ENCODE measurements at regions of chr1 and their contacts with region 1.

Region 1: GRCh38 chr1:64136752-64137411 is 66.5 kb upstream of the UBE2U start:
- DNase-seq: peak; percentile 85
- ATAC-seq: peak; percentile 88
- H3K4me3 Mint-ChIP-seq: no peak overlapping the region
- H3K27ac Mint-ChIP-seq: no peak overlapping the region
- H3K4me1 Mint-ChIP-seq: no peaks in the 10 kb centered on the region
- H3K27me3 Mint-ChIP-seq: peaks cover 2% of the 10 kb centered on the region
- CTCF ChIP-seq: peak; percentile 92

Region 2: GRCh38 chr1:63615768-63616420 is 521.0 kb before region 1 on chr1:
- CTCF ChIA-PET with region 1: interaction called, 19 read pairs
- POLR2A ChIA-PET with region 1: no interaction called
- intact Hi-C with region 1: loop called (anchors 2 kb)
- DNase-seq: peak; percentile 68
- ATAC-seq: peak; percentile 69
- H3K4me3 Mint-ChIP-seq: no peak overlapping the region
- H3K27ac Mint-ChIP-seq: no peak overlapping the region
- H3K4me1 Mint-ChIP-seq: no peaks in the 10 kb centered on the region
- H3K27me3 Mint-ChIP-seq: no peaks in the 10 kb centered on the region
- CTCF ChIP-seq: peak; percentile 84

Region 3: DNA sequence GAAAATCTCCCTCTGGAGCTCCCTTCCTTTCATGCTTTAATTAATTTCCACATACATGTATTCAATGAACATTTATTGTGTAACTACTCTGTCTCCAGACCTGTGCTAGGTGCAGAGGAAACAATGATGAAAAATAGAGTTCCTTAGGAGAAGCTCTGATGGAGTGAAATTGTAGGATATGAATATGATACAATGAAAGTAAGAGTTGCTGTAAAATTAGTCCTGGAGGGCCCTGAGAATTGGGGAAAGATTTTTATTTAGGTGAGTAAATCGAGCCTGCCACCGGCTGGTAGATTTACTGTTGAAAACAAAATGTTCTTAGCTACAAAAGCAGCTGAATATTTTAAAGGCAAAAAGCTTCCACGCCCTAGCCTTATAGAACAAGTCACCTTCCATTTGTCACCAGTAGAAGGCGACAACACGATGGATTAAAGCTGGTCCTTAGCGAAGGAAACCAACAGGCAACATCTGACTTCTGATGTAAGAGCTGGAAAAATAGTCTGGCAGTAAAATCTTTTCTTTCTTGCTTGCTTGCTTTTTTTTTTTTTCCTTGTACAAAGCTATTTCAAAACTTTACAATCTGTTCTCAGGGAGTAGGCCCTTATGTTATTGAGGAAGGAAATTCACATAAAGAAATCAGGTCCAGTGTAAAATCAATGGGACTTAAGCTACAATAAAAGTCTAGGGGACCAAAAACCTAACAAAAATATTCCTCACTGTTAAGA is 445.0 kb before region 1 on chr1:
- CTCF ChIA-PET with region 1: interaction called, 40 read pairs
- POLR2A ChIA-PET with region 1: no interaction called
- intact Hi-C with region 1: loop called (anchors 10 kb)
- DNase-seq: peak; percentile 46
- ATAC-seq: peak; percentile 78
- H3K4me3 Mint-ChIP-seq: no peak overlapping the region
- H3K27ac Mint-ChIP-seq: no peak overlapping the region
- H3K4me1 Mint-ChIP-seq: no peaks in the 10 kb centered on the region
- H3K27me3 Mint-ChIP-seq: no peaks in the 10 kb centered on the region
- CTCF ChIP-seq: peak; percentile 62

Region 4: DNA sequence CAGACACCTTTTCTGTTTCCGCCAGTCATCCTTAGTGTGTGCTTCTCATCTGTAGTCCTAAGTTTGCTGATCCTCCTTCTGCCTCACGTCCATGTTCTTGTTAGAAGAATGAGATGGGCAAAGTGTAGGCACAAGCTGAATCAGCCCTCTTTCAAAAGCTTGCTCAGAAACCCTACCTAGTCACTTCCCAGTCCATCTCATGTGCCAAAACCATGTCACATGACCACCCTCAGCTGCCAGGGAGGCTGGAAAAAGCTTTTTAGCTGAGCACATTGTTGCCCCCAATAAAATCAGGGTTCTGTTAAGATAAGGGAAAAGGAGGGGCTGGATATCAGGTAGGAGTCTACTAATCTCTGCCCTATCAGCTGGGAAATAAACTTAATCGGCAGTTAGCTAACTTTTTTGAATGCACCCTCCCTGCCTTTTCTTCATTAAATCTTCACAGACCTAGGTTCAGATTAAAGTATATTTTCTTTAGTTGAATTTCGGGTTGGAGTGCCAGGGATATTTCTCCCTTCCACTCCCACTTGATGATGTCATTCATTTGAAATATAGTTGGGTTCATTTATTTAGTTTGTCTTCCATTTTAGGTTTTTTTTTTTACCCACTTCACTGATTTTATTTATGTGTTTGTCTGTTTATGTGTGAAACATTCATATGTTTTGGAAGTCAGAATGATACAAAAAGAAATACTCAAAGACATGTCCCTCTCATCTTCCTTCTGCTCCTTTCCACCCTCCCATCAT is 233.9 kb before region 1 on chr1:
- CTCF ChIA-PET with region 1: no interaction called
- POLR2A ChIA-PET with region 1: no interaction called
- intact Hi-C with region 1: no loop called
- DNase-seq: no peak
- ATAC-seq: no peak
- H3K4me3 Mint-ChIP-seq: no peak overlapping the region
- H3K27ac Mint-ChIP-seq: no peak overlapping the region
- H3K4me1 Mint-ChIP-seq: no peaks in the 10 kb centered on the region
- H3K27me3 Mint-ChIP-seq: peaks cover 5% of the 10 kb centered on the region
- CTCF ChIP-seq: no peak

Region 5: GRCh38 chr1:64126581-64126980 is 10.3 kb before region 1 on chr1:
- CTCF ChIA-PET with region 1: interaction called, 10 read pairs
- POLR2A ChIA-PET with region 1: no interaction called
- intact Hi-C with region 1: no loop called
- DNase-seq: no peak
- ATAC-seq: no peak
- H3K4me3 Mint-ChIP-seq: no peak overlapping the region
- H3K27ac Mint-ChIP-seq: no peak overlapping the region
- H3K4me1 Mint-ChIP-seq: no peaks in the 10 kb centered on the region
- H3K27me3 Mint-ChIP-seq: peaks cover 7% of the 10 kb centered on the region
- CTCF ChIP-seq: no peak

Region 6: GRCh38 chr1:64147759-64148158 is 10.9 kb after region 1 on chr1:
- CTCF ChIA-PET with region 1: interaction called, 25 read pairs
- POLR2A ChIA-PET with region 1: interaction called, 3 read pairs
- intact Hi-C with region 1: no loop called
- DNase-seq: no peak
- ATAC-seq: no peak
- H3K4me3 Mint-ChIP-seq: no peak overlapping the region
- H3K27ac Mint-ChIP-seq: no peak overlapping the region
- H3K4me1 Mint-ChIP-seq: no peaks in the 10 kb centered on the region
- H3K27me3 Mint-ChIP-seq: peaks cover 4% of the 10 kb centered on the region
- CTCF ChIP-seq: no peak

Region 7: GRCh38 chr1:64242895-64243756 is 106.2 kb after region 1 on chr1:
- CTCF ChIA-PET with region 1: interaction called, 24 read pairs
- POLR2A ChIA-PET with region 1: no interaction called
- intact Hi-C with region 1: loop called (anchors 10 kb)
- DNase-seq: no peak
- ATAC-seq: no peak
- H3K4me3 Mint-ChIP-seq: peak overlapping the region; percentile 24
- H3K27ac Mint-ChIP-seq: no peak overlapping the region
- H3K4me1 Mint-ChIP-seq: peaks cover 20% of the 10 kb centered on the region
- H3K27me3 Mint-ChIP-seq: peaks cover 6% of the 10 kb centered on the region
- CTCF ChIP-seq: peak; percentile 59